ENCODE measurements at regions of chr9 and their contacts with region 1.

Region 1: GRCh38 chr9:136482793-136483588 is at the start of gene SEC16A:
- DNase-seq: peak; percentile 93
- H3K4me3 ChIP-seq: peak within 1 kb of the TSS; percentile 76 to 91 (median 79)
- H3K27ac ChIP-seq: peak within 1 kb of the TSS; percentile 97
- H3K4me1 ChIP-seq: peaks cover 26% of the 10 kb centered on the region
- H3K27me3 ChIP-seq: no peaks in the 10 kb centered on the region
- CTCF ChIP-seq: no peak
- total RNA-seq, gene SEC16A: 66.0 to 106 TPM

Region 2: GRCh38 chr9:135990468-135991429 is 492.2 kb before region 1 on chr9:
- CTCF ChIA-PET with region 1: no interaction called
- dilution Hi-C with region 1: no loop called
- in situ Hi-C with region 1: no loop called
- intact Hi-C with region 1: no loop called
- DNase-seq: peak; percentile 27
- H3K4me3 ChIP-seq: no peak overlapping the region
- H3K27ac ChIP-seq: no peak overlapping the region
- H3K4me1 ChIP-seq: peaks cover 18% of the 10 kb centered on the region
- H3K27me3 ChIP-seq: peaks cover 16% of the 10 kb centered on the region
- CTCF ChIP-seq: no peak

Region 3: GRCh38 chr9:136339173-136339957 is 143.6 kb before region 1 on chr9:
- CTCF ChIA-PET with region 1: no interaction called
- dilution Hi-C with region 1: loop called (anchors 5 kb)
- in situ Hi-C with region 1: no loop called
- intact Hi-C with region 1: no loop called
- DNase-seq: peak; percentile 38
- H3K4me3 ChIP-seq: no peak overlapping the region
- H3K27ac ChIP-seq: no peak overlapping the region
- H3K4me1 ChIP-seq: peaks cover 14% of the 10 kb centered on the region
- H3K27me3 ChIP-seq: no peaks in the 10 kb centered on the region
- CTCF ChIP-seq: peak; percentile 93

Region 4: DNA sequence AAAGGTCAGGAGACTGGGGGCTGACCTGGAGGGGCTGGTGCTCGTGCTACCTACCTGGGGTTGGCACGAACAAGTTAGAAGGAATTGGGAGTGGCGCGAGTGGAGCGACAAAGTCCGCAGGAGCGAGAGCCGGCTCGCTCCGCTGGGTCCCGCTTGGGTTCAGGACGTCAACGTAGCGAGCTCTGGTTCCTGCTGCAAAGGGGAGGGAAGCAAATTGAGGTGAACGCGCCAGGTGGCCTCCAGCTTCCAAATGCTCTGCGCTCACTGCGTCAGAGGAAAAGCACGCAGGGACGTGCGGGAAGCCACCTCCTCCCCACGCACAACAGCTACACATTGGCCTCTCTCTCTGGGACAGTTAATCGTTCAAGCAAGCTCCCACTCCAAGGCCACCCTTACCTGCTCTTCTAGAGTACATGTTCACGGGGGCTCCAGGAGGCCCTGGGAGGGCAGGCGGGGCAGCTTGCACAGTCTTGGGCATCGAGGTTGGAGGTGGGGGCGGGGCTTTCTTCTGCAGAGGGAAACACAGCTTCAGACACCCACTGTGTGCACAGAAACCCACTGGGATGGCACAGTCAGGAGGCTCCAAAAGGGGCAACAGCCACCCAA is 35.7 kb before region 1 on chr9:
- CTCF ChIA-PET with region 1: no interaction called
- dilution Hi-C with region 1: loop called (anchors 5 kb)
- in situ Hi-C with region 1: no loop called
- intact Hi-C with region 1: no loop called
- DNase-seq: no peak
- H3K4me3 ChIP-seq: no peak overlapping the region
- H3K27ac ChIP-seq: no peak overlapping the region
- H3K4me1 ChIP-seq: no peaks in the 10 kb centered on the region
- H3K27me3 ChIP-seq: no peaks in the 10 kb centered on the region
- CTCF ChIP-seq: no peak

Region 5: GRCh38 chr9:136567651-136568287 is 84.8 kb after region 1 on chr9:
- CTCF ChIA-PET with region 1: no interaction called
- dilution Hi-C with region 1: no loop called
- in situ Hi-C with region 1: no loop called
- intact Hi-C with region 1: no loop called
- DNase-seq: peak; percentile 65
- H3K4me3 ChIP-seq: no peak overlapping the region
- H3K27ac ChIP-seq: peak overlapping the region; percentile 36
- H3K4me1 ChIP-seq: peaks cover 20% of the 10 kb centered on the region
- H3K27me3 ChIP-seq: no peaks in the 10 kb centered on the region
- CTCF ChIP-seq: no peak

Region 6: DNA sequence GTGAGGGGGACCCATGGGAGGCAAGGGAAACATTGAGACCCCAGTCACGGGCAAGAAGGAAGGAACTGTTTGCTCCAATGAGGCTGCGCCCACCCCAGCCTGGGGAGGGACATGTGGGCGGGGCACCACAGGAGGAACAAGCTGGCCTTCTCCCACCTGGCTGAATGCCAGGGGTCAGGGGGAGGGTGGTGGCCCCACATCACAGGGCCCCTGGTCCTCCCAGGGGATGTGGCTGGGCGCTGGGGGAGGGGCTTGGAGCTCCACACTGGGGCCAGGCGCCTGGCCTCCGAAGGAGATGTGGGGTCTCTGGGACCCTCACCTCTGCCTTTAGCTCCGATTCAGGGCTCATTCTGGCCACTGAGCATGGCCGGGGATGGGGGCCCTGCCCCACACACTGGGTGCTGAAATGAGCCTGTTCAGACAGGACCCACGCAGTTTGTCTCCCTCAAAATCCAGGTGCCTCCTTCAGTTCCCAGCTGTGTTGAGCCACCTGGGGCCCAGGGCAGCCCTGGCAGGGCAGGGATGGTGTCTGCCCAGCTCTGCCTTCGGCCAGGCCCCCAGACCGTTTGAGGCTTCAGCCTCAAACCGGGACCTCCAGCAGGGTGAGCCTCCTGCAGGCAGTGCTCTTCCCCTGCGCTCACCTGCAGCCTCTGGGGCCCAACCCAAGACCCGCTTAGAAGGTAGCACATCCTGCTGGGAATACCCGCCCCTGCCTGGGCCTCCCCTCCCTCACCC is 96.1 kb after region 1 on chr9:
- CTCF ChIA-PET with region 1: no interaction called
- dilution Hi-C with region 1: loop called (anchors 5 kb)
- in situ Hi-C with region 1: no loop called
- intact Hi-C with region 1: no loop called
- DNase-seq: peak; percentile 36
- H3K4me3 ChIP-seq: no peak overlapping the region
- H3K27ac ChIP-seq: no peak overlapping the region
- H3K4me1 ChIP-seq: peaks cover 12% of the 10 kb centered on the region
- H3K27me3 ChIP-seq: no peaks in the 10 kb centered on the region
- CTCF ChIP-seq: peak in 1 of 2 donors; percentile 8

Region 7: GRCh38 chr9:136644598-136645351 is 161.8 kb after region 1 on chr9:
- CTCF ChIA-PET with region 1: no interaction called
- dilution Hi-C with region 1: loop called (anchors 5 kb)
- in situ Hi-C with region 1: no loop called
- intact Hi-C with region 1: no loop called
- DNase-seq: no peak
- H3K4me3 ChIP-seq: no peak overlapping the region
- H3K27ac ChIP-seq: no peak overlapping the region
- H3K4me1 ChIP-seq: peaks cover 10% of the 10 kb centered on the region
- H3K27me3 ChIP-seq: peaks cover 4% of the 10 kb centered on the region
- CTCF ChIP-seq: peak; percentile 80 to 87

Region 8: GRCh38 chr9:136784249-136784996 is 301.4 kb after region 1 on chr9:
- CTCF ChIA-PET with region 1: no interaction called
- dilution Hi-C with region 1: no loop called
- in situ Hi-C with region 1: no loop called
- intact Hi-C with region 1: loop called (anchors 2 kb)
- DNase-seq: no peak
- H3K4me3 ChIP-seq: no peak overlapping the region
- H3K27ac ChIP-seq: no peak overlapping the region
- H3K4me1 ChIP-seq: no peaks in the 10 kb centered on the region
- H3K27me3 ChIP-seq: no peaks in the 10 kb centered on the region
- CTCF ChIP-seq: peak; percentile 12 to 27

Measured in mammary epithelial cell (primary cell).